GM12878 (cell line): ENCODE measurements at regions of chr11 and their contacts with region 1.

Region 1: DNA sequence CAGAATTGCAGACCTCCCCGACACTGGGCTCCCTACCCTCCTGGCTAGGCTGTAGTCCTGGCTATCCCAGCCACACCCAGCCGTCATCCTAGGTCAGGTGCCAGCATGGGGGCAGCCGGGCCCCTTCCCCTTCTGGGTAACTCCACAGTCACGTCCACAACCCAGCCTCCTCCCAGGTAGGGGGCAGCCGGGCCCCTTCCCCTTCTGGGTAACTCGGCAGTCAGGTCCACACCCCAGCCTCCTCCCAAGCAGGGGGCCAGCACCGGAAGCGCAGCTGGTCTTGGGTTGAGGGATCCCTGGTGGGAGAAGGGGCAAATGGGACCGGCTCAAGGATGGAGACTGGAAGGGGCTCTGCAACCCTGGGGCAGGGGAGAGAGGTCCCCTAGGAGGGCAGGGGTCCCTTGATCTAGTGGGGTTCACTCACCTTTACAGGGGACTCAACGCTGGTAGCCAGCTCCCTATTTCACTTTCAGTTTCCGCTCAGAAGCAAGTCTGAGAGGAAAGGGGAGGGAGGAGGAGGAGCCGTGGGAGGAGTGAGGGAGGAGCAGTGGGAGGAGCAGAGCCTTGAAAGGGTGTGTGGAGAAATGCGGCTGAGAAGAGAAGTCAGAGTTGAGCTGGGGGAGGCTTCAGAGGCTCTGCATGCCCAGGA is at the start of gene TRIM21:
- DNase-seq: peak; percentile 72
- ATAC-seq: peak; percentile 99
- H3K4me3 ChIP-seq: peak within 1 kb of the TSS; percentile 87
- H3K27ac ChIP-seq: peak within 1 kb of the TSS; percentile 95
- H3K4me1 ChIP-seq: no peaks in the 10 kb centered on the region
- H3K27me3 ChIP-seq: no peaks in the 10 kb centered on the region
- CTCF ChIP-seq: no peak
- EP300 ChIP-seq: no peak
- POLR2A ChIP-seq: peak; percentile 82
- RAD21 ChIP-seq: no peak
- polyA plus RNA-seq, gene TRIM21: 24.7 to 28.6 TPM

Region 2: DNA sequence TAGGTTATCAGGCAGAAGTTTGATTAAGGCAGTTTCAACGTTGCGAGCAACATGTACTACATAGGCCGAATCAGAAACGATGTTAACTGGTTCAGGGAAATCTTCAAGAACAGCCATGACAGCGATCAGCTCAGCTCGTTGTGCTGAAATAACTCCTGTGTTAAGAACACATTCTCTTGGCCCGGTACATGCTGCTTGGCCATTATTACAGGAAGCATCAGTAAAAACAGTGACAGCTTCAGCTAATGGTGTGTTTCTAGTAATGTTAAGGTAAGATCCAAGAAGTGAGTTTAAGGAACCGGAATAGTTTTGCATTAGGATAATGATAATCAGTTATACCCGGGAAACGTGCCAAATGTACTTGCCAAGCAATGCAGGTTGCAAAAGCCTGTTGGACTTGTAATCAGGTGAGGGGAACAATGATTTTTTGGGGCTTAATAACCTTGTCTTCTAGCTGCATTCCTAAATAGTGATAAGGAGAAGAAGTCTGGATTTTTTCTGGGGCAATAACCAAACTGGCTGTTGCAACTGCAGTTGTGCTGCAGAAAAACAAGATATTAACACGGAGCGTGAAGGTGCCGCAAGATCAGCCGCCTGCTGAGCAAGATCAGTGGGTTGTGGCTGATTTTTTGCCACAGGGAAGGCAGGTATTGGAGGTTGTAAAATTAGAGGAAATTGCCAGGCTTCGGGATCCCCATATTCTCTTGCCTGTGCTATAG is 103.4 kb after region 1 on chr11:
- CTCF ChIA-PET with region 1: interaction called, 3 read pairs
- POLR2A ChIA-PET with region 1: no interaction called
- RAD21 ChIA-PET with region 1: no interaction called
- SMC1A ChIA-PET with region 1: no interaction called
- in situ Hi-C with region 1: no loop called
- intact Hi-C with region 1: loop called (anchors 5 kb)
- DNase-seq: no peak
- ATAC-seq: no peak
- H3K4me3 ChIP-seq: no peak overlapping the region
- H3K27ac ChIP-seq: no peak overlapping the region
- H3K4me1 ChIP-seq: no peaks in the 10 kb centered on the region; the same call in 1 of the 2 replicates
- H3K27me3 ChIP-seq: no peaks in the 10 kb centered on the region
- CTCF ChIP-seq: no peak
- EP300 ChIP-seq: no peak
- POLR2A ChIP-seq: no peak
- RAD21 ChIP-seq: no peak